ENCODE measurements at regions of chr7 and their contacts with region 1.

Region 1: DNA sequence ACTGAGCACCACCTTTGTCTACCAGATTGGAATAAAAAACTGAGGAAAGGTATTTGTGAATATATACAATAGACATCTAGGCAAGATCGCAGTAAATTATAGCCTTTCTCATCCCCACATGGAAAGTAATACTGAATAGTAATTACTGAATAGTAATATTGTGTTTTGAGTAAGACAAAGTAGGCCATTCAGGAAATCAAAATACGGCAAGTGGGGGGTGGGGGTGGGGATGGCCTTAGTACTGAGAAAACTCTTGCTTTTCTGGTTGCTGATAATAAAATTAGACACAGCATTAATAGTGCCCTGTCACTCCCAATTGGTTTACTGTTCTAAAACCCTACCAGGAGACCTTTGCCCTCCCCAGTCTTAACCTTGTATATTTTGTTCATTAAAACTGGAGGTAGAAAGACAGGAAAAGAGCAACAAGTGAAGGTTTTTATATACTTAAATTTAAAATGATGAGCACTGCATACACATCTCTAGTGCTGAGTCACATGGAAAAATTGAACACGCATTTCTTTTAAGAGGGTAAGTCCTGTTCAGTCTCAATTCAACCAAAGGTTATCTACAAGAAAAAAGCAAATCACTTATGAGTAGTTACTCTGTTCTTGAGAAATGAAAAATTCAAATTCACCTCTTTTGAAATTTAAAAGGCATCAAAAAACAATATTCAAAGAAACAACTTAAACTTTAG is 65.6 kb downstream of the IGF2BP3 start:
- DNase-seq: peak; percentile 44
- ATAC-seq: peak; percentile 87
- H3K4me3 Mint-ChIP-seq: no peak overlapping the region
- H3K27ac Mint-ChIP-seq: peak overlapping the region; percentile 84
- H3K4me1 Mint-ChIP-seq: peaks cover 28% of the 10 kb centered on the region
- H3K27me3 Mint-ChIP-seq: no peaks in the 10 kb centered on the region
- CTCF ChIP-seq: no peak

Region 2: DNA sequence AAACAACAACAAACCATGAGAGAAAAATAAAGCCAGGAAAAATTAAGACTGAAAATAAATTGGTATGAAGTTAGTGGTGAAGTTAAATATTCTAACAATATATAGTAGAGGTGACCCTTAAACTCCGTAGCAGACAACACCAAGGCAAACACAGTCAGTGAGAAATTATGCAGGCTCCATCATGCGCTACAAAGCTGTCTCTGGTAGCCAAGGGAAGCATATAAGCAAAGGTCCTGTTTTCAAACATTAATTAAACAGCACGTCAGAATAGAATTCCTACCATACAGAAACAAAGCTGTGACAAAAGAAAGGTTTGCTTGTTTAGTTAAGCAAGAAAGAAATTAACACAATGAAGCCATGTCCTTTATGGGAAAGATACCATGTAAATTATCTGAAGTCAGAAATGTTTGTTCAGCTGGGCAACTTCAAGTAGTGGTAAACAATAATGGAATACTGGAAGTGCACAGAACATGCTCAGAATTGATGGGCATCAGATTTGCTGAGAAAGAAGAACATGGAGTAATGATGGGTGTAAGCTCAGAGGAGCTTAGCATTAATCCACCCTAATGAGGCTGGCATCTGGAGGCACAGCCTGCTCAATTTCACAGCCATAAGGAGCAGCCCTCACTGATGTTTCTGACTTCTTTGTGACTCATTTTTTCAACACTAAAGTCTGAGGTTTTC is 10.1 kb before region 1 on chr7:
- CTCF ChIA-PET with region 1: interaction called, 15 read pairs
- POLR2A ChIA-PET with region 1: interaction called, 3 read pairs
- intact Hi-C with region 1: no loop called
- DNase-seq: no peak
- ATAC-seq: no peak
- H3K4me3 Mint-ChIP-seq: no peak overlapping the region
- H3K27ac Mint-ChIP-seq: no peak overlapping the region
- H3K4me1 Mint-ChIP-seq: peaks cover 24% of the 10 kb centered on the region
- H3K27me3 Mint-ChIP-seq: peaks cover 3% of the 10 kb centered on the region
- CTCF ChIP-seq: no peak

Measured in activated CD8-positive, alpha-beta T cell treated with anti-CD3 and anti-CD28 coated beads for 36 hours (primary cell).